CD4-positive, alpha-beta T cell (primary cell): ENCODE measurements at regions of chr10 and their contacts with region 1.

Region 1: DNA sequence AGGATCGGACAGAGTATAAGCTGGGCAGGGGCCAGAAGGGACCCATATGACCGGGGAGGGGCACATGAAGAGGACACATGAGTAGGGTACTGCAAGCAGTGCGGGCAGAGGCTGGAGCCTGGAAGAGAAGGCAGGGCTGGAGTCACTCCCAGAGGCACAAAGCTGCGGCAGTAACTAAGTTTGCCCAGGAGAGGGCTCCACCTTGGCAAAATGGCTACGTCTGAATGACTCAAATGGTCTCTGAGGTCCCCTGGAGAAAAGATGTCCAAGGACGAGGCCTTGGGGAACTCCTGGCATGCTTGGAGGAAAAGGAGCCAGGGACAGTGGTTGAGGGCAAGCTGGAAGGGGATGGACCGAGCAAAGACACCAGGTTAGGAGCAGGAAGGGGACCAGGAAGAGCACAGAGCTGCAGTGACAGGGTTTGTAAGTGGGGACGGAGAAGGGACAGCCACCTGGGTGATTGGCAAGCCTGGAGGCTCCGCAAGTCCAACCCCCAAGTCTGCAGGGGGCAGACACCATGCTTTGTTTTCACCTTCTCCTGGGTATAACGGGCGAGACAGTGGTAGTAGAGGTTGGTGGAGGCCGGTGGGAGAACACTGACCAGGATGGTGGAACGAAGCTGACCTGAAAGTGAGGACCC is 43.1 kb upstream of the LBX1 start:
- DNase-seq: peak; percentile 28 to 73 (median 50)
- ATAC-seq: peak; percentile 90
- H3K4me3 ChIP-seq: no peak overlapping the region
- H3K4me3 Mint-ChIP-seq: no peak overlapping the region
- H3K27ac ChIP-seq: no peak overlapping the region
- H3K27ac Mint-ChIP-seq: no peak overlapping the region
- H3K4me1 ChIP-seq: peaks cover 2% of the 10 kb centered on the region
- H3K4me1 Mint-ChIP-seq: no peaks in the 10 kb centered on the region
- H3K27me3 ChIP-seq: peaks cover 3 to 7% of the 10 kb centered on the region in 2 experiments
- H3K27me3 Mint-ChIP-seq: peaks cover 42% of the 10 kb centered on the region
- CTCF ChIP-seq: peak; percentile 70

Region 2: GRCh38 chr10:101120884-101121653 is 151.3 kb before region 1 on chr10:
- CTCF ChIA-PET with region 1: no interaction called
- POLR2A ChIA-PET with region 1: no interaction called
- intact Hi-C with region 1: no loop called
- DNase-seq: peak in 11 of 14 experiments; percentile 23 to 72 (median 41)
- ATAC-seq: peak; percentile 89
- H3K4me3 ChIP-seq: peak overlapping the region; percentile 79
- H3K4me3 Mint-ChIP-seq: peak overlapping the region; percentile 97
- H3K27ac ChIP-seq: no peak overlapping the region
- H3K27ac Mint-ChIP-seq: peak overlapping the region; percentile 68
- H3K4me1 ChIP-seq: peaks cover 39% of the 10 kb centered on the region
- H3K4me1 Mint-ChIP-seq: peaks cover 28% of the 10 kb centered on the region
- H3K27me3 ChIP-seq: peaks cover 42 to 49% of the 10 kb centered on the region in 2 experiments
- H3K27me3 Mint-ChIP-seq: peaks cover 70% of the 10 kb centered on the region
- CTCF ChIP-seq: no peak

Region 3: GRCh38 chr10:101441541-101442455 is 169.4 kb after region 1 on chr10:
- CTCF ChIA-PET with region 1: interaction called, 5 read pairs
- POLR2A ChIA-PET with region 1: no interaction called
- intact Hi-C with region 1: loop called in 1 of 2 experiments (anchors 2 kb)
- DNase-seq: peak in 6 of 14 experiments; percentile 3 to 63 (median 28)
- ATAC-seq: peak; percentile 98
- H3K4me3 ChIP-seq: no peak overlapping the region
- H3K4me3 Mint-ChIP-seq: no peak overlapping the region
- H3K27ac ChIP-seq: no peak overlapping the region
- H3K27ac Mint-ChIP-seq: no peak overlapping the region
- H3K4me1 ChIP-seq: no peaks in the 10 kb centered on the region
- H3K4me1 Mint-ChIP-seq: peaks cover 10% of the 10 kb centered on the region
- H3K27me3 ChIP-seq: no peaks in the 10 kb centered on the region
- H3K27me3 Mint-ChIP-seq: no peaks in the 10 kb centered on the region
- CTCF ChIP-seq: peak; percentile 31